ENCODE measurements at regions of chr15 and their contacts with region 1.

Region 1: DNA sequence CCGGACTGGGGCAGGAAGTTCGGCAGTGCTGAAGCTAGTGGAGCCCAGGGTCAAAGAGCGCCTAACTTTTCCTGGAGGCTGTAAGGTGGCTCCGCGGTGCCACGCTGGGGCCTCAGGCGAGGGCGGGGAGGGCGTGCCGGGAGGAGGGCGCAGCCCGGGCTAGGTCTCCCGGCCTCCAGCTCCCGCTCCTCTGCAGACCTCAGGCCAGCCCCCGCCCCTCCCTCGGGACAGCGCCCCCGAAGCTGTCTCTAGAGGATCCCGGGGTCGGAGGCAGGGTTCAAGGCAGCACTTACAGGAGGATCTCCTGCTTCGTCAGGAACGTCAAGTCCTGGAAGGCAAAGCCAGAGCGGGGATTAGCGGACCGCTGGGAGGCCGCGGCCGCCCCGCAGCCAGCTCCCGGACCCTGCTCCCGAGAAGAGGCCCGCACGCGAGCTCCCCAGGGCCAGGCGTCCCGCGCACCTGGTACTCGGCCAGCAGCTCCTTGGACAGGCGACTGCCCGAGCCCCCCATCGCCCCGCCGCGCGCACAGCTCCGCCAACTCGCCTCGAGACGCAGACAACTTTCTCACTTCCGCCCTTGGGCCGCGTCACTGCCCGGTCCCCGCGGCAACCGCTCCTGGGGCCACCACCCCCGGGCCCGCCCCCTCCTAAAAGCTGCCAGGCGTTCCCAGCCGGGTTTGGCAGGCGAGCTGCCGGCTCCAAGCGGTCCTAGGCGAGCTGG is at the start of gene CIB1:
- DNase-seq: peak; percentile 97
- H3K4me3 ChIP-seq: peak within 1 kb of the TSS; percentile 79
- H3K27ac ChIP-seq: peak within 1 kb of the TSS; percentile 73
- H3K4me1 ChIP-seq: peaks cover 31% of the 10 kb centered on the region
- CTCF ChIP-seq: peak; percentile 18; the same call in 1 of the 2 replicates
- total RNA-seq, gene CIB1: 52.8 and 53.2 TPM in 2 replicates

Region 2: GRCh38 chr15:90131848-90132247 is 101.7 kb before region 1 on chr15:
- CTCF ChIA-PET with region 1: no interaction called
- POLR2A ChIA-PET with region 1: no interaction called
- intact Hi-C with region 1: no loop called
- DNase-seq: peak; percentile 7
- H3K4me3 ChIP-seq: no peak overlapping the region
- H3K27ac ChIP-seq: no peak overlapping the region
- H3K4me1 ChIP-seq: peaks cover 11% of the 10 kb centered on the region
- CTCF ChIP-seq: no peak

Region 3: GRCh38 chr15:90143166-90143655 is 90.3 kb before region 1 on chr15:
- CTCF ChIA-PET with region 1: no interaction called
- POLR2A ChIA-PET with region 1: interaction called, 4 read pairs
- intact Hi-C with region 1: loop called (anchors 5 kb)
- DNase-seq: peak; percentile 79
- H3K4me3 ChIP-seq: no peak overlapping the region
- H3K27ac ChIP-seq: no peak overlapping the region
- H3K4me1 ChIP-seq: peaks cover 6% of the 10 kb centered on the region
- CTCF ChIP-seq: peak; percentile 97

Region 4: GRCh38 chr15:90265271-90266060 is 31.9 kb after region 1 on chr15 and contains the start of gene NGRN:
- CTCF ChIA-PET with region 1: no interaction called
- POLR2A ChIA-PET with region 1: interaction called, 5 read pairs
- intact Hi-C with region 1: loop called (anchors 1 kb)
- DNase-seq: peak; percentile 93
- H3K4me3 ChIP-seq: peak within 1 kb of the TSS; percentile 74
- H3K27ac ChIP-seq: peak within 1 kb of the TSS; percentile 81
- H3K4me1 ChIP-seq: peaks cover 43% of the 10 kb centered on the region
- CTCF ChIP-seq: no peak
- total RNA-seq, gene NGRN: 65.0 and 72.8 TPM in 2 replicates

Region 5: GRCh38 chr15:90352109-90352893 is 118.8 kb after region 1 on chr15 and contains the start of gene ZNF774:
- CTCF ChIA-PET with region 1: no interaction called
- POLR2A ChIA-PET with region 1: no interaction called
- intact Hi-C with region 1: loop called (anchors 2 kb)
- DNase-seq: peak; percentile 98
- H3K4me3 ChIP-seq: peak within 1 kb of the TSS; percentile 75
- H3K27ac ChIP-seq: no peak within 1 kb of the TSS
- H3K4me1 ChIP-seq: peaks cover 4% of the 10 kb centered on the region
- CTCF ChIP-seq: no peak
- total RNA-seq, gene ZNF774: 0.49 and 1.2 TPM in 2 replicates